T-cell (primary cell): ENCODE measurements at regions of chr18 and their contacts with region 1.

Region 1: GRCh38 chr18:12934454-12935071 is 13.2 kb upstream of the SEH1L start:
- DNase-seq: peak; percentile 45 to 90 (median 73)
- ATAC-seq: peak; percentile 82 to 94 (median 85)
- H3K4me3 ChIP-seq: no peak overlapping the region
- H3K4me3 Mint-ChIP-seq: no peak overlapping the region
- H3K27ac ChIP-seq: no peak overlapping the region
- H3K27ac Mint-ChIP-seq: no peak overlapping the region
- H3K4me1 ChIP-seq: peaks cover 0 to 12% of the 10 kb centered on the region in 2 experiments
- H3K4me1 Mint-ChIP-seq: peaks cover 4 to 10% (median 6%) of the 10 kb centered on the region in 3 donors
- H3K27me3 ChIP-seq: no peaks in the 10 kb centered on the region
- H3K27me3 Mint-ChIP-seq: peaks cover 3 to 4% of the 10 kb centered on the region in 2 donors

Region 2: GRCh38 chr18:12391618-12392165 is 542.9 kb before region 1 on chr18:
- CTCF ChIA-PET with region 1: interaction called, 4 to 10 read pairs
- POLR2A ChIA-PET with region 1: no interaction called
- DNase-seq: peak in 27 of 35 experiments; percentile 19 to 74 (median 38)
- ATAC-seq: peak; percentile 86 to 94 (median 87)
- H3K4me3 ChIP-seq: no peak overlapping the region
- H3K4me3 Mint-ChIP-seq: no peak overlapping the region
- H3K27ac ChIP-seq: no peak overlapping the region
- H3K27ac Mint-ChIP-seq: no peak overlapping the region
- H3K4me1 ChIP-seq: no peaks in the 10 kb centered on the region
- H3K4me1 Mint-ChIP-seq: no peaks in the 10 kb centered on the region
- H3K27me3 ChIP-seq: peaks cover 0 to 23% of the 10 kb centered on the region in 2 experiments
- H3K27me3 Mint-ChIP-seq: peaks cover 9 to 12% of the 10 kb centered on the region in 2 donors

Region 3: GRCh38 chr18:12556946-12557806 is 377.4 kb before region 1 on chr18:
- CTCF ChIA-PET with region 1: no interaction called
- POLR2A ChIA-PET with region 1: no interaction called
- DNase-seq: no peak
- ATAC-seq: no peak
- H3K4me3 ChIP-seq: no peak overlapping the region
- H3K4me3 Mint-ChIP-seq: no peak overlapping the region
- H3K27ac ChIP-seq: no peak overlapping the region
- H3K27ac Mint-ChIP-seq: no peak overlapping the region
- H3K4me1 ChIP-seq: no peaks in the 10 kb centered on the region
- H3K4me1 Mint-ChIP-seq: no peaks in the 10 kb centered on the region
- H3K27me3 ChIP-seq: peaks cover 0 to 9% of the 10 kb centered on the region in 2 experiments
- H3K27me3 Mint-ChIP-seq: peaks cover 3 to 7% of the 10 kb centered on the region in 2 donors

Region 4: DNA sequence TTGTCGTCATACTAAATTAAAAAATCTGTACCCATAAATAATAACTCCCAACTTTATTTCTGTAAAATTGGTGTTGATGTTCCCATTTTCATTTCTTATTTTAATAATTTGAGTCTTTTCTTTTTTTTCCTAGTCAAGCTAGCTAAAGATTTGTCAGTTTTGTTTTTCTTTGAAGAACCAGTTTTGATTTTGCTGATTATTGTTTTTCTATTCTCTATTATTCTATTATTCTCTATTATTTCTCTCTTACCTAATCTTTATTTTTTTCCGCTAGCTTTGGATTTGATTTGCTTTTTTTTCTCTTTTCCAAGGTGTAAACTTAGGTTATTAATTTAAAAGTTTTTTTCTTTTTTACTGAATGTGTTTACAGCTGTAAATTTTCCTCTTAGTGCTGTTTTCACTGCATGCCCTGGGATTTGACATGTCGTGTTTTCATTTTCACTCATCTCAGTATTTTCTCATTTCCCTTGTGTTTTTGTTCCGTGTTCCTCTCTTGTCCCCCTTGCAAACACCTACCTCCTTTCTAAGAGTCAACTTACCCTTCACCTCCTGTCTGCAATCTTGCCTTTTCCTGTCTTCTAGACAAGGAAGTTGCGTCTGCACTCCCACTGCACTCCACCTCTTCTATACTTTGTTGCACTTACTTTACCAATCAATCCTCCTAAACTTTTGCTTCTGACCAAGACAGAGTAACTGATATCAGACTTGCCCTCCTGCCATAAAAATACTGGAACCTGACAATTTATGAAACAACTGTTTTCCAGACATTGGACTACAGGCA is 212.9 kb before region 1 on chr18:
- CTCF ChIA-PET with region 1: interaction called, 22 to 48 read pairs
- POLR2A ChIA-PET with region 1: interaction called in 1 of 2 experiments, 3 read pairs
- DNase-seq: no peak
- ATAC-seq: no peak
- H3K4me3 ChIP-seq: no peak overlapping the region
- H3K4me3 Mint-ChIP-seq: no peak overlapping the region
- H3K27ac ChIP-seq: no peak overlapping the region
- H3K27ac Mint-ChIP-seq: peak overlapping the region in 1 of 2 donors; percentile 33
- H3K4me1 ChIP-seq: no peaks in the 10 kb centered on the region
- H3K4me1 Mint-ChIP-seq: peaks cover 0 to 8% (median 0%) of the 10 kb centered on the region in 3 donors
- H3K27me3 ChIP-seq: no peaks in the 10 kb centered on the region
- H3K27me3 Mint-ChIP-seq: no peaks in the 10 kb centered on the region

Region 5: DNA sequence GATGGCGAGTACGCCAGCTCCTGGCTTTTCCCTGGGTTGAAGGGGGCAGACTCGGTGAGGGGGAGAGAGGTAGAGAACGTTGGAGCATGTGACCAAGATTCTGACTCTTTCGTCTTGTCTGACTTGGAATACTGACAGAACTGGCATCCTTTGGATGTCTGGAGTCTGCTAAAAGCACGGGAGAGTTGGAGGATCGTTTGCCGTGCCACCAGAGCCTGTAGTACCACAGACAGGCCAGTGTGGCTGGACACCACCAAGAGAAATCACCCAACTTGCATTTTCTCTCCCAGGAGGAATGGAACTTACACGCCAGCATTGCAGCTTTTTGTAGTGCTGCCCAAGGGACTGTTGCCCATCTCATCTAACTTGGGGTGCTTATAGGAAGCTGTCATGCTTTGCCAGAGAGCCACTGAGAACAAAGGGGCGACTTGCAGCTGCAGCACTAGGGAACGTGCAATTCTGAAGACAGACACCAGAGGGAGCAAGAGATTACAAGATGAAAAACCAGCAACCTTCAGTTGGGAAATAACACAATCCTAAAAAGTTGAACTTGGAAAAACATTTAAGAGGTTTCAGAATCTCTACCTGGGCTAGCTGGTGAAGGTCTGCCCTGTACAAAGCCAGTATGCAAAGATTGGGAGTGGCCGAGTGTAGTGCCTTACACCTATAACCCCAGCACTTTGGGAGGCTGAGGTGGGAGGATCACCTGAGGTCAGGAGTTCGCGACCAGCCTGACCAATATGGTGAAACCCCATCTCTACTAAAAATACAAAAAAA is 207.6 kb before region 1 on chr18:
- CTCF ChIA-PET with region 1: interaction called, 22 to 48 read pairs
- POLR2A ChIA-PET with region 1: interaction called in 1 of 2 experiments, 3 read pairs
- DNase-seq: peak in 33 of 35 experiments; percentile 9 to 82 (median 37)
- ATAC-seq: peak; percentile 53 to 67 (median 64)
- H3K4me3 ChIP-seq: no peak overlapping the region
- H3K4me3 Mint-ChIP-seq: no peak overlapping the region
- H3K27ac ChIP-seq: no peak overlapping the region
- H3K27ac Mint-ChIP-seq: no peak overlapping the region
- H3K4me1 ChIP-seq: no peaks in the 10 kb centered on the region
- H3K4me1 Mint-ChIP-seq: peaks cover 0 to 1% (median 0%) of the 10 kb centered on the region in 3 donors
- H3K27me3 ChIP-seq: no peaks in the 10 kb centered on the region
- H3K27me3 Mint-ChIP-seq: no peaks in the 10 kb centered on the region

Region 6: GRCh38 chr18:12744103-12744502 is 190.5 kb before region 1 on chr18:
- CTCF ChIA-PET with region 1: interaction called, 16 to 24 read pairs
- POLR2A ChIA-PET with region 1: no interaction called
- DNase-seq: peak in 1 of 35 experiments; percentile 64
- ATAC-seq: peak in 1 of 4 experiments; percentile 47
- H3K4me3 ChIP-seq: no peak overlapping the region
- H3K4me3 Mint-ChIP-seq: no peak overlapping the region
- H3K27ac ChIP-seq: no peak overlapping the region
- H3K27ac Mint-ChIP-seq: no peak overlapping the region
- H3K4me1 ChIP-seq: no peaks in the 10 kb centered on the region
- H3K4me1 Mint-ChIP-seq: peaks cover 0 to 2% (median 1%) of the 10 kb centered on the region in 3 donors
- H3K27me3 ChIP-seq: peaks cover 0 to 2% of the 10 kb centered on the region in 2 experiments
- H3K27me3 Mint-ChIP-seq: no peaks in the 10 kb centered on the region

Region 7: DNA sequence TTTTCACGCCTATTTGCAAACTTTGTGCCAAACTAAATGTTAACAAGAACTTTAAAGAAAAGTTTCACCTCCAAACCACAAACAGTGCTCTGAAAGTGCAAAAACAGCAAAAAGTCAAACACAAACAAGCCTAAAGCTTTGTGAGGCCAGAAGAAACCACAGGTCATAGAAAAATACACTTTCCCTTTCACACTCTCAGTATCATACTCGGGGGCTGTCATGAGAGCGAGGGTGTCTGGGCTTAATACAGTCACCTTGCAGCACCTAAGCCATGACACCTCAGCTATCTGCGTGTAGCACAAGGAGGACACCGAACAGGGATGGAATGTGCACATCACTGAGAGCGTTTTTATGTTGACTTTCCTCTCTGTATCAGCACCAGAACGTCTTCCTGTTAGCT is 13.4 kb before region 1 on chr18:
- CTCF ChIA-PET with region 1: interaction called in 1 of 2 experiments, 12 read pairs
- POLR2A ChIA-PET with region 1: interaction called in 1 of 2 experiments, 3 read pairs
- DNase-seq: peak in 26 of 35 experiments; percentile 6 to 71 (median 33)
- ATAC-seq: peak; percentile 30 to 93 (median 73)
- H3K4me3 ChIP-seq: no peak overlapping the region
- H3K4me3 Mint-ChIP-seq: peak overlapping the region; percentile 25 to 39 (median 31)
- H3K27ac ChIP-seq: peak overlapping the region; percentile 1
- H3K27ac Mint-ChIP-seq: peak overlapping the region; percentile 60 to 85
- H3K4me1 ChIP-seq: peaks cover 0 to 10% of the 10 kb centered on the region in 2 experiments
- H3K4me1 Mint-ChIP-seq: peaks cover 0 to 18% (median 8%) of the 10 kb centered on the region in 3 donors
- H3K27me3 ChIP-seq: no peaks in the 10 kb centered on the region
- H3K27me3 Mint-ChIP-seq: no peaks in the 10 kb centered on the region